Naive thymus-derived CD4-positive, alpha-beta T cell (primary cell): ENCODE measurements at regions of chr2 and their contacts with region 1.

Region 1: GRCh38 chr2:178112202-178113152 is at the start of gene RBM45:
- DNase-seq: peak; percentile 68 to 91 (median 78)
- ATAC-seq: peak; percentile 97
- H3K4me3 ChIP-seq: peak within 1 kb of the TSS; percentile 90
- H3K4me3 Mint-ChIP-seq: peak within 1 kb of the TSS; percentile 92 to 96 (median 94)
- H3K27ac ChIP-seq: peak within 1 kb of the TSS; percentile 71
- H3K27ac Mint-ChIP-seq: peak within 1 kb of the TSS; percentile 80 to 93 (median 88)
- H3K4me1 ChIP-seq: peaks cover 6 to 14% of the 10 kb centered on the region in 2 donors
- H3K4me1 Mint-ChIP-seq: peaks cover 20 to 47% (median 39%) of the 10 kb centered on the region in 7 donors
- H3K27me3 ChIP-seq: no peaks in the 10 kb centered on the region
- H3K27me3 Mint-ChIP-seq: peaks cover 0 to under 1% (median 0%) of the 10 kb centered on the region in 5 donors
- total RNA-seq, gene RBM45: 8.0 to 26.7 (median 17.5) TPM

Region 2: GRCh38 chr2:177552422-177553175 is 559.9 kb before region 1 on chr2:
- CTCF ChIA-PET with region 1: no interaction called
- POLR2A ChIA-PET with region 1: no interaction called
- intact Hi-C with region 1: loop called in 1 of 2 experiments (anchors 5 kb)
- DNase-seq: peak; percentile 82 to 96 (median 94)
- ATAC-seq: peak; percentile 94
- H3K4me3 ChIP-seq: peak overlapping the region; percentile 89
- H3K4me3 Mint-ChIP-seq: peak overlapping the region; percentile 87 to 99 (median 94)
- H3K27ac ChIP-seq: peak overlapping the region; percentile 100
- H3K27ac Mint-ChIP-seq: peak overlapping the region; percentile 98 to 100 (median 99)
- H3K4me1 ChIP-seq: no peaks in the 10 kb centered on the region
- H3K4me1 Mint-ChIP-seq: peaks cover 4 to 29% (median 14%) of the 10 kb centered on the region in 7 donors
- H3K27me3 ChIP-seq: no peaks in the 10 kb centered on the region
- H3K27me3 Mint-ChIP-seq: peaks cover 0 to 14% (median 4%) of the 10 kb centered on the region in 5 donors

Region 3: DNA sequence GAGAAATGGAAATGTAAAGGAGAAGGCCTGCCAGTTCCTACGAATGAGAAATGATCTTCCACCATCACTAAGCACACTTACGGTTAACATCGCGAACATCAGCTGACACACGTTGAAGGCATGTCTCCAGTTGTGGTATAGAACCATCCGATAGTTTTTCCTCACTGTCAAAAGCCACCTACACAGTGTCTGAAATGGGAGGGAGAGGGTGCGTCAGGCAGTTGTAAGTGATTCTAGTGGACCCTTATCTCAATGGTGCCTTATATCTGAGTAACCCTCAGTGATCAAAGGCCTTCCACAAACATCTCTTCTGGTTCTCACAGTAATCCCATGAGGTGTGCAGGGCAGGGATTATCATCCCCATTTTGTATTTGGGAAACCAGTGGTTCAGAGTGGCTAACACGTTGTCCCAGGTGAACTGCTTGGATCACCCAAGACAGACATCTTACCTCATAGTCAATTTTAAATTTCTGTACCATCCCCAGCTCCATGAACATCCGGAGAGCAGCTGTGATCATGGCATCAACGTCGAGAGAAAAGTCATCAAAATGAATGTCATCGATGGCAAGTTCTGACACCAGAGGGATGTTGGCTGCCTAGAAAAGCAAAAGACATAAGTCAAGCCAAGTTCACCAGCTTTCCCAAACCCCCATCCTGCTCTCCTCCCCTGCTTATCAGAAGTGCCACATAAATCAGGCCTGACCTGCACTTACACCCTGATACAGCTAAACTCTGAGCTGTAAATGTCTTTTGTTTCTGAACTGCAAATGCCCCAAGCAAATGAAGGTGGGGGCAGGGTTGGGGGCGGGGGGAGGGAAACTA is 384.7 kb before region 1 on chr2:
- CTCF ChIA-PET with region 1: no interaction called
- POLR2A ChIA-PET with region 1: no interaction called
- intact Hi-C with region 1: no loop called
- DNase-seq: no peak
- ATAC-seq: no peak
- H3K4me3 ChIP-seq: no peak overlapping the region
- H3K4me3 Mint-ChIP-seq: no peak overlapping the region
- H3K27ac ChIP-seq: no peak overlapping the region
- H3K27ac Mint-ChIP-seq: no peak overlapping the region
- H3K4me1 ChIP-seq: no peaks in the 10 kb centered on the region
- H3K4me1 Mint-ChIP-seq: peaks cover 0 to 2% (median 0%) of the 10 kb centered on the region in 7 donors
- H3K27me3 ChIP-seq: no peaks in the 10 kb centered on the region
- H3K27me3 Mint-ChIP-seq: peaks cover 20 to 54% (median 21%) of the 10 kb centered on the region in 5 donors

Region 4: DNA sequence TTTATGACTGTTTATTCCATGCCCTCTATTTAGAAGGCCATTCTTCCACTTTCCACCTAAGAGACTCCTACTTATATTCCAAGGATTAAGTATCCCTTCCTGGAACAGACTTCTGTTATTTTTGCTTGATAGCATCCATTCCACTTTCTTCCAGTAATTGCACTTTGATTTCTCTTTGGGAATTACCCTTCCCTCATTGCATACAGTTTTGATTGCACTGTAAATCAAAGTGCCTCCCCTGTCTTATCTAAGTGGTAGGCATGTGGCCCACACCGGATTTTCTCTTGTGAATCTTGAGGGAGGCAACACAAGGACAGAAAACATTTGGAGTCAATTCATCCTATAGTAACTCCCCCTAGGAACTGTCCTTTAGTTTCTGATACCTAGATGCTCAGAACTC is 160.3 kb before region 1 on chr2:
- CTCF ChIA-PET with region 1: no interaction called
- POLR2A ChIA-PET with region 1: no interaction called
- intact Hi-C with region 1: no loop called
- DNase-seq: no peak
- ATAC-seq: no peak
- H3K4me3 ChIP-seq: no peak overlapping the region
- H3K4me3 Mint-ChIP-seq: no peak overlapping the region
- H3K27ac ChIP-seq: no peak overlapping the region
- H3K27ac Mint-ChIP-seq: no peak overlapping the region
- H3K4me1 ChIP-seq: no peaks in the 10 kb centered on the region
- H3K4me1 Mint-ChIP-seq: peaks cover 0 to 2% (median 0%) of the 10 kb centered on the region in 7 donors
- H3K27me3 ChIP-seq: no peaks in the 10 kb centered on the region
- H3K27me3 Mint-ChIP-seq: peaks cover 0 to 23% (median 8%) of the 10 kb centered on the region in 5 donors

Region 5: DNA sequence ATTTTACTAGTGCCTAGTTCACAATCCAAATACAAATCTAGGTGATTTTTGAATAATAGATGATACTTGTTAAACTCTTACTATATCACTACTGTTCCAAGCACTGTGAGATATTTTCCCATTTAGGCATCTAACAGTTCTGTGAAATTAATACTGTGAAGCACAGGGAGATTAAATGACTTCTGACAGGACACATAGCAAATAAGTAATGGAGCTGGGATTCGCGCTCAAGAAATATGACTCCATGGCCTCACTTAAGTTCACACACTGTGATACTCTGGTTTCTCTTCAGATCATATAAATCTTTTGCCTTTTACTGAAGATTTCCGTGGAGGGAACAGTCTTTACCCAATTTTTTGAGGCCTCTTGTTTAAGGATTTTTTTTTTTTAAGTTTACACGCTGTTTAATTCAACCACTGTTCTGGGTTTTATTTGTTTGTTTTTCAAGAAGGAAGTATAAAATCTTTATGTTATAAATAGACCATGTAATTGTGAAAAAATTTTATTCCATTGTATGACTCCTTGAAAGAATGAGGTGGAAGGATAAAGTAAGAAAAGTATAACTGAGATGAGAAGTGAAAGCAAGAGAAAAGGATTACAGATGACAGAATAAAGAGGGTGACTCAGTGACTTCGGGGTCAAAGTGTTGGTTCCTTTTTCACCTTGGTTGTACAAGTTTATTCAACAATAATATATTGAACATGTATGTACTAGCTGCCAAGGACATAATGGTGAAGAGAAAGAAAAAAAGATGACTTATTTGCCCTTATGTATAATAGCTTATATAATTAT is 30.0 kb after region 1 on chr2:
- CTCF ChIA-PET with region 1: no interaction called
- POLR2A ChIA-PET with region 1: no interaction called
- intact Hi-C with region 1: no loop called
- DNase-seq: no peak
- ATAC-seq: no peak
- H3K4me3 ChIP-seq: no peak overlapping the region
- H3K4me3 Mint-ChIP-seq: no peak overlapping the region
- H3K27ac ChIP-seq: no peak overlapping the region
- H3K27ac Mint-ChIP-seq: no peak overlapping the region
- H3K4me1 ChIP-seq: no peaks in the 10 kb centered on the region
- H3K4me1 Mint-ChIP-seq: peaks cover 0 to 2% (median 0%) of the 10 kb centered on the region in 7 donors
- H3K27me3 ChIP-seq: no peaks in the 10 kb centered on the region
- H3K27me3 Mint-ChIP-seq: peaks cover 14 to 26% (median 15%) of the 10 kb centered on the region in 5 donors

Region 6: GRCh38 chr2:178280244-178280852 is 167.9 kb after region 1 on chr2:
- CTCF ChIA-PET with region 1: interaction called, 3 read pairs
- POLR2A ChIA-PET with region 1: no interaction called
- intact Hi-C with region 1: loop called (anchors 1 kb)
- DNase-seq: peak in 7 of 9 donors; percentile 3 to 45 (median 33)
- ATAC-seq: peak; percentile 85
- H3K4me3 ChIP-seq: no peak overlapping the region
- H3K4me3 Mint-ChIP-seq: no peak overlapping the region
- H3K27ac ChIP-seq: no peak overlapping the region
- H3K27ac Mint-ChIP-seq: no peak overlapping the region
- H3K4me1 ChIP-seq: no peaks in the 10 kb centered on the region
- H3K4me1 Mint-ChIP-seq: no peaks in the 10 kb centered on the region
- H3K27me3 ChIP-seq: no peaks in the 10 kb centered on the region
- H3K27me3 Mint-ChIP-seq: peaks cover 13 to 24% (median 19%) of the 10 kb centered on the region in 5 donors

Region 7: DNA sequence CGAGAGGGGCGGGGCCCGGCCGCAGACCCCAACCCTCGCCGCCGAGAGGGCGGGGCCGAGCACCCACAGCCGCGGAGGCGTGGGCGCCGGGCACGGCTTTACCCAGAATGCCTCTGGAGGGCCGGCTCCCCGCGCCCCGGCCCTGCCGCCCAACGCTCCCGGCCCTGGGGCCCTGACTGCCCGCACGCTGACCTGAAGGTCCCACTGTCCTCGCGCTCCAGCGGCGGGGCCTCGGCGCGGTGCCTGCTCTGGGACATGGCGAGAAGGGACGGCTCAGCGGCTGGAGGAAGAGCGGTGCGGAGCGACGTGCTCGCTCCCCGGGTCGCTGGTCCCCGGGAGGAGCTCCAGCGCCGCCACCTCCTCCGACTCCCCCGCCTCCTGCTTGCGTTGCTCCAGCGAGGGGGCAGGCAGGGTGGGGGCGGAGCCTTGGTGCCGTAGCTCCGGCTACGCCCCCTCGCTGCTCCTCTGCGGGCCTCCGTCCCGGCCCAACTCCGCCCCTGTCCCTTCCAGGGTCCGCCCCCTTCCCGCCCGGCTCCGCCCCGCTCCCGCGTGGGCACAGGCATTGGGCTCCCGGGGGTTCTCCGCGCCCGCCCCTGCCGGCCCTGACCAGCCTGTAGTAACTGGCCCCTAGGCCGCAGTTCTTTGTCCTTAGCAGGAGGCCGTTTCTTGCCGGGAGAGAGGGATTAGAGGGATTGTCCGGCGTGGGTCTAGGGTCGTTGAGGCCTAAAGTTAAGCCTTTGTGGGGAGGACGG is 338.5 kb after region 1 on chr2 and contains the starts of genes PJVK and PRKRA:
- CTCF ChIA-PET with region 1: no interaction called
- POLR2A ChIA-PET with region 1: interaction called, 4 read pairs
- intact Hi-C with region 1: loop called in 1 of 2 experiments (anchors 1 kb)
- DNase-seq: peak; percentile 92 to 99 (median 93)
- ATAC-seq: peak; percentile 94
- H3K4me3 ChIP-seq: peak within 1 kb of the TSS; percentile 94
- H3K4me3 Mint-ChIP-seq: peak within 1 kb of the TSS; percentile 90 to 96 (median 90)
- H3K27ac ChIP-seq: peak within 1 kb of the TSS; percentile 100
- H3K27ac Mint-ChIP-seq: peak within 1 kb of the TSS; percentile 88 to 98 (median 95)
- H3K4me1 ChIP-seq: peaks cover 12 to 25% of the 10 kb centered on the region in 2 donors
- H3K4me1 Mint-ChIP-seq: peaks cover 12 to 36% (median 30%) of the 10 kb centered on the region in 7 donors
- H3K27me3 ChIP-seq: no peaks in the 10 kb centered on the region
- H3K27me3 Mint-ChIP-seq: peaks cover 0 to 9% (median 0%) of the 10 kb centered on the region in 5 donors
- total RNA-seq, gene PJVK: 2.1 to 6.3 (median 3.8) TPM
- total RNA-seq, gene PRKRA: 40.8 to 113 (median 59.4) TPM

Region 8: GRCh38 chr2:178914259-178914849 is 801.9 kb after region 1 on chr2:
- CTCF ChIA-PET with region 1: no interaction called
- POLR2A ChIA-PET with region 1: no interaction called
- intact Hi-C with region 1: loop called in 1 of 2 experiments (anchors 5 kb)
- DNase-seq: peak; percentile 32 to 67 (median 59)
- ATAC-seq: peak; percentile 90
- H3K4me3 ChIP-seq: no peak overlapping the region
- H3K4me3 Mint-ChIP-seq: no peak overlapping the region
- H3K27ac ChIP-seq: no peak overlapping the region
- H3K27ac Mint-ChIP-seq: no peak overlapping the region
- H3K4me1 ChIP-seq: no peaks in the 10 kb centered on the region
- H3K4me1 Mint-ChIP-seq: peaks cover 0 to 17% (median 4%) of the 10 kb centered on the region in 7 donors
- H3K27me3 ChIP-seq: no peaks in the 10 kb centered on the region
- H3K27me3 Mint-ChIP-seq: no peaks in the 10 kb centered on the region